ENCODE measurements at regions of chr17 and their contacts with region 1.

Region 1: DNA sequence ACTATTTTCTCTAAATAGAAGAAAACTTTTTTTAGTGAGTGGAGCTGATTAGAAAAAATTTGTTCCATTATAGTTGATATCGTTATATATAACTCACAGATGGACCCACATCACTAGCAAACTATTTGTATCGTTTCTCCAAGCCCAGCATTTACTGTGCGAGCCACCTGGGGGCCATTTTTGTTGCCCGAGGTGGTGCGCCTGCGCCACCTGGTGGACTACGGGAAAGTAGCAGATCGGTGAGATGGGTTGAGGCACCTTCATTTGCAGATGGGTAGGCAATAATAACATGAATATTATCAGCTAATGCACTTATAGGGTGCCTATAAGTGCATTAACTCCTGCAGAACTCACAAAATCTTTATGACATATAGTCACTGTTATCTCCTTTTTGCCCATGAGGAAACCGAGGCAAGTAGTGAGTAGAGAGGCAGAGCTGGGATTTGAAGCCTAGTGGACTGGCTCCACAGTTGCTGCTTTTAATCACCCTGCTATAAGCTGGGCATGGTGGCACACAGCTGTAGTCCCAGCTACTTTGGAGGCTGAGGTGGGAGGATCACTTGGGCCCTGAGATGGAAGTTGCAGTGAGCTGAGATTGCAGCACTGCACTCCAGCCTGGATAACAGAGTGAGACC is 23.2 kb upstream of the NTN1 start:
- DNase-seq: peak; percentile 94
- H3K4me3 Mint-ChIP-seq: no peak overlapping the region
- H3K27ac Mint-ChIP-seq: no peak overlapping the region
- H3K4me1 Mint-ChIP-seq: peaks cover 9% of the 10 kb centered on the region
- H3K27me3 Mint-ChIP-seq: peaks cover 36% of the 10 kb centered on the region

Region 2: DNA sequence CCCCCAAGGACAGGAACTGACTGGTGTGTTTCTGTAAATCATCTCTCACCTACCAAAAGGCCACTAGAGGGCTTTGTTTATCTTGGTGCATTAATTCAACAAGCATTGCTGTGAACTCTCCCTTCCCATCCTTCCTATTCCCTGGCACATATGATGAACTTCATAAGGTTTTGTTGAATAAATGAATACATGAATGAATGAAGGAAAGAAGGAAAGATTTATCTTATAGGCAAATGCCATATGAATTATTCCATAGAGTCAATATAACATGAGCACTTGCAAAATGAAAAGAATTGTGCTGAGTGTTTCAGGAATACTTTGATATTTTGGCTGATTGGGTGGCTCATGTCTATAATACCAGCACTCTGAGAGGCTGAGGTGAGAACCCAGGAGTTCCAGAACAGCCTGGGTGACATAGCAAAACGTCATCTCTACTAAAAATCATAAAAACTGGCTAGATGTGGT is 244.1 kb before region 1 on chr17:
- intact Hi-C with region 1: loop called (anchors 5 kb)
- DNase-seq: no peak
- H3K4me3 Mint-ChIP-seq: no peak overlapping the region
- H3K27ac Mint-ChIP-seq: no peak overlapping the region
- H3K4me1 Mint-ChIP-seq: no peaks in the 10 kb centered on the region
- H3K27me3 Mint-ChIP-seq: peaks cover 10% of the 10 kb centered on the region

Region 3: GRCh38 chr17:8935191-8935590 is 62.9 kb before region 1 on chr17:
- intact Hi-C with region 1: loop called (anchors 2 kb)
- DNase-seq: peak; percentile 79
- H3K4me3 Mint-ChIP-seq: peak overlapping the region; percentile 74
- H3K27ac Mint-ChIP-seq: peak overlapping the region; percentile 97
- H3K4me1 Mint-ChIP-seq: peaks cover 57% of the 10 kb centered on the region
- H3K27me3 Mint-ChIP-seq: no peaks in the 10 kb centered on the region

Region 4: GRCh38 chr17:9021158-9021991 is 23.3 kb after region 1 on chr17 and contains the start of gene NTN1:
- intact Hi-C with region 1: loop called (anchors 2 kb)
- DNase-seq: peak; percentile 91
- H3K4me3 Mint-ChIP-seq: peak within 1 kb of the TSS; percentile 77
- H3K27ac Mint-ChIP-seq: peak within 1 kb of the TSS; percentile 31
- H3K4me1 Mint-ChIP-seq: peaks cover 4% of the 10 kb centered on the region
- H3K27me3 Mint-ChIP-seq: peaks cover 51% of the 10 kb centered on the region
- total RNA-seq, gene NTN1: 0.43 and 0.51 TPM in 2 replicates

Region 5: DNA sequence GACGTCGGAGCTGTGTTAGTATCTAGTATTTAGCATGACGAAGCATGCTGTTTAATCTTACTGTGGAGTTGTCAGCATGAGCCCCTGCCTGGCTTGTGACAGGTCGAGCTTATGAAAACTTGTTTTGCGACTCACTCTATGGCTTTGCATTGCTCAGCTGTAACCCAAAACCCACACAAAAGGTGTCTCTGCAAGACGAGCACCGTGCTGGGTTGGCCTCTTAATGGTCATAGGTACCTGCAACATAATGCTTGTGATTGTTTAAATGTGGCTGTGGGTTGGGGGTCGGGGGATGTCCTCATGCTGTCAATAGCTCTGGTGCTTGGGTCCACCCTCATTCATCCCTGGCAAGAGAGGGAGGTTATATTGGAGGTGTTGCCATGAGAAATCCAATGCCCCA is 28.6 kb after region 1 on chr17:
- intact Hi-C with region 1: loop called (anchors 1 kb)
- DNase-seq: no peak
- H3K4me3 Mint-ChIP-seq: no peak overlapping the region
- H3K27ac Mint-ChIP-seq: no peak overlapping the region
- H3K4me1 Mint-ChIP-seq: peaks cover 4% of the 10 kb centered on the region
- H3K27me3 Mint-ChIP-seq: peaks cover 50% of the 10 kb centered on the region

Region 6: DNA sequence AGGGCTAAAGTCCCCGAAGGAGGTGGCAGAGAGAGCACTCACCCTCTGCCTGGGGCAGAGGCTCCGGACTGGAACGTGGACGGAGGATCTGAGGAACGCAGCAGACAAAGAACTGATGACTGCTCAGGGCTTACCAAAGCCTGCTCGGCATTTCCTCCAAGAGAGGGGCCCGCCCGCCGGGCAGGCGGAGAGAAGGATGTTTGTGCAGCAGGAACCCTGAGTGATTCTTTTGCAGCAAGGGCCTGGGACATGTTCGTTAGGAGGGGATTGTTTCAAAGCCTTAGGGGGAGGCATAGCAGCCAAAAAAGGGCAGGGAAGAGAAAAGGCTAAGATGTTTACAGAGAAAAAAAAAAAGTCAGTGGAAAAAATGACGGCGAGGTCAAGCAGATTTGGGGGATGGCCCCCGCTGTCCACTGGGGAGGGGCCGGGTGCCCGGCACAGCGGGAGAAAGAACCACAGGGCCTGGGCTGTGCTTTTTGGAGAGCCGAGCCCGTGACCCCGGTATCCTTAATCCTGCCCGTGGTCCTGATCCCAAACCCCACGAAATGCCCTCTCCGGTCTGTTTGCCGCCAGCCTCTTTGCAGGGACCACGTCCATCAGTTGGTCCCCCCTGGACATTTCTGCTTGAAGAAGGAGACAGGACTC is 152.5 kb after region 1 on chr17:
- intact Hi-C with region 1: no loop called
- DNase-seq: no peak
- H3K4me3 Mint-ChIP-seq: no peak overlapping the region
- H3K27ac Mint-ChIP-seq: no peak overlapping the region
- H3K4me1 Mint-ChIP-seq: no peaks in the 10 kb centered on the region
- H3K27me3 Mint-ChIP-seq: no peaks in the 10 kb centered on the region

Measured in activated CD4-positive, alpha-beta T cell treated with anti-CD3 and anti-CD28 coated beads, Interleukin-2, amount 10 ng/mL, durations not matched to agents 24 days and 14 days (primary cell).